Left cardiac atrium (tissue), 4 donors: ENCODE measurements at regions of chr13 and their contacts with region 1.

Region 1: GRCh38 chr13:21675095-21675991 is 4.5 kb downstream of the FGF9 start:
- DNase-seq: peak; percentile 27
- ATAC-seq: peak; percentile 40

Region 2: DNA sequence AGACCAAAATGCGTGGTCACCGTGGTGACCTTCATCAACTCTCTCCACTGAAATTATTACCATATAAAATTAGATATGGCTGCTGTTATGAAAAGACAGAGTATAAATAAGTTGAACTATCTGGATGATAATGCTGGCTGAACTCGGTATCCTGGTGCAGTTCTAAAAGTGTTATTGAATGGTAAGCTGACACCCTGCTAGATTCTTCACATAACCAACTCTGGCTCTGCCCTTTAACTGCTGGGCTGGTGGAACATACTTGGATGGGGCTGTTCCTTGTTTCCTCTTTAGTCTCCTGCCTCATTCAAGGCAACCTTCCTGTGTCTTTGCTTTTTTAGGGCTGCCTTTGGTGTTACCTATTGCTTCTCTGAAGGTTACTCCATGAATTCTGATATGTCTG is 102.5 kb after region 1 on chr13:
- intact Hi-C with region 1: loop called in 1 of 2 experiments (anchors 5 kb)
- DNase-seq: no peak
- ATAC-seq: peak; percentile 68 to 76